Activated CD4-positive, alpha-beta memory T cell treated with anti-CD3 and anti-CD28 coated beads for 36 hours (primary cell): ENCODE measurements at regions of chr16 and their contacts with region 1.

Region 1: DNA sequence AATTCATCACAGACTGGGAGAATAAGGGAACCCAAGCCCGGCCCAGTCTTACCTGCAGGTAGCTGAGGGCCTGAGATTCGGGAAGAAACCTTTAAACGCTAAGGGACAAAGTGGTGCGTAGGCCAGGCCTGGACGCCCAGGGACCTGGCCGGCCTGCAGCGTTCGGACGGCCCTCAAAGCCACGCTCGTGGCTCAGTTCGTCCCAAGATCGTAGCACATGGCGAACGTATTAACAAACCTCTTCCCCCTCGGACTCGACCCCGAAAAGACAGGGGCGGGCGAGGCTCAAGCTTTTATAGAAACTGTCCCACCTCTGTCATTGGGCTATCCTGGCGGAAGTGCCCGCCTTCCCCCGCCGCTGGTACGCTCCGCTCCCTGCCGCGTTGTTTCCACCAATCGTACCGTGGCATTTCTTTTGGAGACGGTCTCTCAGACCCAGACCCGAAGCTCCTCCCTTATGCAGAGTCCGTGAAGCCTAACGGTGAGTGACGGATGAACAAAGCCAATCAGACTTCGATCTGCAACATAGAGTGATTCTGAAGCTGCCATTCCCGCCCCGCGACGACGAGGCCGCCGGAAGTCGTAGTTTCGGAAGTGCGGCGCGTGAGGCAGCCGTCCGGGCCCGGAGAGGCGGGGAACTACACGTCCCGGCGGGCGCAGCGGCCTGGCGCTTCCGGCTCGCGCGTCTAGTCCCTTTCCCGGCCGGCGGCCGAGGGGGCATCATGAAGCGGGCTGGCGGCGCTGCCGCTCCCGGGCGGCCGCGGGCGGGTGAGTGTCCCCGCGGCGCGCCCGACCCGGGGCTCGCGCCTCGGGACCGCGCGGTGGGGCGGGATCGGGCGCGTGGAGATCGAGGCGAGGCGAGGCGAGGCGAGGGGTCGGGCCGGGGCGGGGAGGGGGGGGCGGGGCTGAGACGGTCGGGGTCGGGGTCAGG is at the start of gene TRAF7:
- DNase-seq: peak; percentile 98
- H3K4me3 Mint-ChIP-seq: peak within 1 kb of the TSS; percentile 93
- H3K27ac Mint-ChIP-seq: peak within 1 kb of the TSS; percentile 87
- H3K4me1 Mint-ChIP-seq: peaks cover 42% of the 10 kb centered on the region
- H3K27me3 Mint-ChIP-seq: no peaks in the 10 kb centered on the region
- total RNA-seq, gene TRAF7: 77.1 to 80.3 TPM

Region 2: DNA sequence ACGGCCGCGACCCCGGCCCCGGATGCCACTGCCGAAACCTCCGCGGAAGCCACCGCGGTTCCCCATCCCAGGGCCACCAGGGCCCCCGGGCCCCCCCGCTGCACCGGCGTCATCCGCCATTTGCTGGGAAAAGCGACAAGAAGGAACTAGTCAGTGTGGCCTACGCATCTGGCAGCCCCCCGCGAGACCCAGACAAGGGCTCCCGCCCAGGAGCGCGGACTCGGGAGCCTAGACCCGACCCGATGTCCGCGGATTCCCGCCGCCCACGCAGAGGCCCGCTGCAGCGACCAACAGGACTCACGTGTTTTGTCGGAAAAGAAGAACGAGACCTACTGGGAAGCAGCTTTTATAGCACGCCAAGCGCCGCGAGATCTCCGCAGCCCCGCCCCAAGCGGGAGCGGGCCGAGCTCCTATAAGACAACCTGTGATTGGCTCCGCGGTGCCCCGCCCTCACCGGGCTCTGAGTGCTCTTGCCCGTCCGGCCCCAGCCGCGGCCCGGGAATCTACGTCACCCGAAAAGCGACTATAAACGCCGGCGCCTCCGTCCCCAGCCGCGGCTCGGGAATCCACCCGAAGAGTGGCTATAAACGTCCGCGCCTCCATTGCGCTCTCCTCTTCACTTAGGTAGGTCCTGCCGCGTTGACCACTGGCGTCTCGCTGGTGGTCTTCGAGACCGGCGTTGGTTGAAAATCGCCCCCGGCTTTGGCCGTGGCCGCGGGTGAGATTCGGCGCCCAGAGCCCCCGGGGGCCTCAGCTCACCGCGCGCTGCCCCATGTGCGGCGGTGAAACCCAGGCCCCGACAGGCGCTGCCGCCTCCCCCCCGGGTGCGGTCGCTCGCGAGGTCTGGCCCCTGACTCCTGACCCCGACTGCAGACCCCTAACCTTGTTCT is 190.6 kb before region 1 on chr16 and contains the start of gene RPS2:
- CTCF ChIA-PET with region 1: no interaction called
- POLR2A ChIA-PET with region 1: interaction called, 11 read pairs
- intact Hi-C with region 1: no loop called
- DNase-seq: peak; percentile 99
- H3K4me3 Mint-ChIP-seq: peak within 1 kb of the TSS; percentile 92
- H3K27ac Mint-ChIP-seq: peak within 1 kb of the TSS; percentile 96
- H3K4me1 Mint-ChIP-seq: peaks cover 41% of the 10 kb centered on the region
- H3K27me3 Mint-ChIP-seq: no peaks in the 10 kb centered on the region
- total RNA-seq, gene RPS2: 5,123 to 5,136 TPM

Region 3: GRCh38 chr16:2047330-2048115 is 107.8 kb before region 1 on chr16 and contains the starts of genes NTHL1 and TSC2:
- CTCF ChIA-PET with region 1: interaction called, 5 read pairs
- POLR2A ChIA-PET with region 1: interaction called, 22 read pairs
- intact Hi-C with region 1: loop called (anchors 1 kb)
- DNase-seq: peak; percentile 97
- H3K4me3 Mint-ChIP-seq: peak within 1 kb of the TSS; percentile 89
- H3K27ac Mint-ChIP-seq: no peak within 1 kb of the TSS
- H3K4me1 Mint-ChIP-seq: peaks cover 13% of the 10 kb centered on the region
- H3K27me3 Mint-ChIP-seq: no peaks in the 10 kb centered on the region
- total RNA-seq, gene NTHL1: 24.3 to 26.2 TPM
- total RNA-seq, gene TSC2: 56.6 to 63.9 TPM

Region 4: DNA sequence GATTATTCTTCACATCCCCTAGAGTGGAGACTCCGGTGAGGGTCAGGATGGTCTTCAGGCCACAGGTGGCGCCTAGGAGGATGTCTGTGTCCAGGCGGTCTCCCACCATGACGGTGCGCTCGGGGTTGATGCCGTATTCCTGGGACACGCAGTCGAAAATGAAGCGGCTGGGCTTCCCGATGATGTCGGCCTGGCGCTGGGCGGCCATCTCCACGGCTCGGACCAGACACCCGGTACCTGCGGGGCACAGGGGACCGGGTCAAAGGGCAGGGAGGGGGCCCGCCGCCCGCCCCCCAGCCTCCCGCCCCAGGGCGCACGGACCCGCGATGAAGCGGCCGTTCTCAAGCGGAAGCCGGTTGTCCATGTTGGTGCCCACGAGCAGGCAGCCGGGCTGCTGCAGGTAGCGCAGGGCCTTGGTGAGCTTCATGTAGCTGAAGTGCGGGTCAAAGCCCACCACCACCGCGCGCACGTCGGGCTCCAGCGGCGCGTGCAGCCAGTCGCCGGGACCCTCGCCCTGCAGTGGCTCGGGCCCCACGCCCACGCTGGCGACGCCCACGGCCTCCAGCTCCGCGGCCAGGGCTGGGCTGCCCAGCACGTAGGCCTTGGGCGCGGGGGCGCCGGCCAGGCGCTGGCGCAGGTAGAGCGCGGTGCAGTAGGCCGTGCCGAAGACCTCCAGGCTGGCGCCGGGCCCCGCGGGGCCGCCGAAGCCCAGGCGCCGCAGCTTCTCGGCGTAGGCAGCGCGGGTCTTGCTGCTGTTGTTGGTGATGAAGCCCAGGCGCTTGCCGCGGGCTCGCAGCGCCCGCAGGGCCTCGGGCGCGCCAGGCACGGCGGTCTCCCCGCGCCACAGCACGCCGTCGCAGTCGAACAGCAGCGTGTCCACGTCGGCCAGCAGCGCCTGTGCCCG is 58.7 kb after region 1 on chr16:
- CTCF ChIA-PET with region 1: no interaction called
- POLR2A ChIA-PET with region 1: interaction called, 18 read pairs
- intact Hi-C with region 1: loop called (anchors 2 kb)
- DNase-seq: peak; percentile 27
- H3K4me3 Mint-ChIP-seq: peak overlapping the region; percentile 76
- H3K27ac Mint-ChIP-seq: no peak overlapping the region
- H3K4me1 Mint-ChIP-seq: peaks cover 20% of the 10 kb centered on the region
- H3K27me3 Mint-ChIP-seq: no peaks in the 10 kb centered on the region

Region 5: DNA sequence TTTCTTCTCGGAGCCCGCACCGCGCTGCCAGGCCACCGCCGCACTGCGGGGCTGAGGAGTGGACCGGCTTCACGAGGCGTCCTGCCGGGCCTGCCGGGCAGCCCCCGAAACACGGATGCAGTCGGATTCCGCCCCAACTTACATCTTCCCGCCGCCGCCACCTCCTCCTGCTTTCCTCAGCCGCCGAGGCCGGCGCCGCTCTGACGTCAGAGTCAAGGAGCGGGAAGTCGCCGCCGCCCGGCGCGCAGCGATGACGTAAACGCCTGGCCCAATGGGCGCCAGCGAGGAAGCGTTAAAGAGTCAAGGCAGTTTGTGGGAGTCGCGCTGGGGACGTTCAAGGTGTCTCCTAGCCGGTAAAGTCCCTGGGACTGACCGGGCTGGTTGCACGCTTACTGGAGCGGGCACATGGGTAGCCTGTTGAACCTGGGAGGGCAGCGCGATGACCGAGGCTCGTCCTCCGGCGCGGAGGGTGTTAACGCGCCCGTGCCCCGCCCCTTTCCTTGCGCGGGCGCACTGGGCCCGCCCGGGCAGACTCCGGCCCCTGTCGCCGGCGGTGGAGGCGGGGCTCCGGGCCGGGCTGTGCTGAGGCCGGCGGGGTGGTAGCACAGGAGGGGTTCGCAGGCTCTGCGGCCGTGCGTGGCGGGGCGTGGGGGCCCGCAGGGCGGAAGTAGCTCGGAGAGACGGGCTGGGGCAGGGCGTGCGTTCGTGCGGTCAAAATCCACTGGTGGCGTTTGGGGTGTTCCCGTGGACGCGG is 112.7 kb after region 1 on chr16 and contains the start of gene RNPS1:
- CTCF ChIA-PET with region 1: no interaction called
- POLR2A ChIA-PET with region 1: interaction called, 3 read pairs
- intact Hi-C with region 1: loop called (anchors 5 kb)
- DNase-seq: peak; percentile 97
- H3K4me3 Mint-ChIP-seq: peak within 1 kb of the TSS; percentile 88
- H3K27ac Mint-ChIP-seq: peak within 1 kb of the TSS; percentile 97
- H3K4me1 Mint-ChIP-seq: peaks cover 35% of the 10 kb centered on the region
- H3K27me3 Mint-ChIP-seq: no peaks in the 10 kb centered on the region
- total RNA-seq, gene RNPS1: 292 to 294 TPM